Pancreas (tissue), 10 donors: ENCODE measurements at regions of chr11 and their contacts with region 1.

Region 1: GRCh38 chr11:86202013-86202336 is 42.6 kb upstream of the EED start:
- DNase-seq: no peak
- ATAC-seq: peak in 2 of 4 donors; percentile 44 to 55
- H3K4me3 ChIP-seq: no peak overlapping the region
- H3K27ac ChIP-seq: peak overlapping the region in 2 of 4 donors; percentile 15 to 33
- H3K4me1 ChIP-seq: no peaks in the 10 kb centered on the region
- H3K27me3 ChIP-seq: no peaks in the 10 kb centered on the region
- CTCF ChIP-seq: no peak

Region 2: DNA sequence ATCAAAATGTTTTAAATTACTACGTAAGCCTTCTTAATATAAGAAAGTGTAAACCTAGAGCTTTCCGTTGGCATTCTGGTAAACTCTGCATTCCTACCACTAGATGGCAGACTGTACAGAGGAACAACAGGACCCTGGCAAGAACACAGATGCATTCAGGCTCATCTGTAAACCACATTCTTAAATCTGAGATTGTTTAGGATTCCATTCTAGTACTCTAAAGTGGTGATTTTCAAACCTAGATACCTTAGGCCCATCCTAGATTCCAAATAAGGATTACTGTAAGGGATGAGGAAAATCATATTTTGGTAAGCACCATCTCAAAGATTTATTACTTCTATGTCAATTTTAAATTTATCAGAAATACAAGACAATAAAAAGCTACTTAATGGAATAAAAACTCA is 160.0 kb before region 1 on chr11:
- intact Hi-C with region 1: loop called in 2 of 3 experiments (anchors 10 kb)
- DNase-seq: peak in 3 of 6 donors; percentile 57 to 66 (median 61)
- ATAC-seq: peak; percentile 79 to 97 (median 94)
- H3K4me3 ChIP-seq: peak overlapping the region in 1 of 4 donors; percentile 7
- H3K27ac ChIP-seq: no peak overlapping the region
- H3K4me1 ChIP-seq: peaks cover 12 to 42% (median 31%) of the 10 kb centered on the region in 3 donors
- H3K27me3 ChIP-seq: no peaks in the 10 kb centered on the region
- CTCF ChIP-seq: peak; percentile 66 to 84 (median 78)

Region 3: GRCh38 chr11:86174101-86175046 is 27.6 kb before region 1 on chr11:
- intact Hi-C with region 1: no loop called
- DNase-seq: peak in 4 of 6 donors; percentile 27 to 57 (median 40)
- ATAC-seq: peak; percentile 76 to 87 (median 84)
- H3K4me3 ChIP-seq: no peak overlapping the region
- H3K27ac ChIP-seq: peak overlapping the region in 2 of 4 donors; percentile 8 to 31
- H3K4me1 ChIP-seq: peaks cover 0 to 5% (median 0%) of the 10 kb centered on the region in 3 donors
- H3K27me3 ChIP-seq: no peaks in the 10 kb centered on the region
- CTCF ChIP-seq: no peak